Activated naive CD8-positive, alpha-beta T cell treated with anti-CD3 and anti-CD28 coated beads, Interleukin-2, amount 10 ng/mL, durations not matched to agents 7 days and 5 days (primary cell): ENCODE measurements at regions of chr4 and their contacts with region 1.

Region 1: DNA sequence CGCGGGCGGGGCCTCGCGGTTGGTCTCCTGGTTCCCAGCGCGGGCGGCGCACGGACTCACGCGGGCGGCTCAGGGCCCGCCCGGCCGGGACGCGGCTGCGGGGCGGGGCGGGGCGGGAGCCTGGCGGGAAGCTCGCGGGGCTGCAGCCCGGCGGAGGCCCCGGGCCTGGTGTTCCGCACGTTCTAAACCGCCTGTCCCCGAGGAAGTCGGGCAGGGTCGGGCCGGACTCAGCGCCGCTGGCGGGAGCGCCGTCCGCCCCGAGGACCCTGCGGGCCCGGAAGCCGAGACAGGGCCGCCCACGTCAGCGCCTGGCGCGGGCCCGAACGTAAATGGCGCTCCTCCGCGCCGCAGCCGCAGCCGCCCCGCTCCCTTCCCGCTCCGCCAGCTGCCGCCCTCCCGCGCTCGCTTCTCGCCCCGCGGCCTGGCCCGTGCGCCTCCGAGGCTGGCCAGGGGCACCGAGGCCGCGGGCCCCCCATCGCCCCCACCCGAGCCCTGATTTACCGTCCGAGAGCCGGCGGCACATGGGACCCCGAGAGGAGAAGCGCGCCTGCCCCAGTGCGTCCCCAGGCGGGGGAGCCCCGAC is 309 bp upstream of the CTBP1 start:
- DNase-seq: peak; percentile 93
- ATAC-seq: peak; percentile 51
- H3K4me3 Mint-ChIP-seq: peak overlapping the region; percentile 87
- H3K27ac Mint-ChIP-seq: peak overlapping the region; percentile 95
- H3K4me1 Mint-ChIP-seq: peaks cover 35% of the 10 kb centered on the region
- H3K27me3 Mint-ChIP-seq: no peaks in the 10 kb centered on the region

Region 2: GRCh38 chr4:1167247-1167949 is 81.8 kb before region 1 on chr4:
- POLR2A ChIA-PET with region 1: interaction called, 11 read pairs
- DNase-seq: peak; percentile 87
- ATAC-seq: peak; percentile 93
- H3K4me3 Mint-ChIP-seq: peak overlapping the region; percentile 84
- H3K27ac Mint-ChIP-seq: peak overlapping the region; percentile 87
- H3K4me1 Mint-ChIP-seq: peaks cover 20% of the 10 kb centered on the region
- H3K27me3 Mint-ChIP-seq: peaks cover 12% of the 10 kb centered on the region

Region 3: DNA sequence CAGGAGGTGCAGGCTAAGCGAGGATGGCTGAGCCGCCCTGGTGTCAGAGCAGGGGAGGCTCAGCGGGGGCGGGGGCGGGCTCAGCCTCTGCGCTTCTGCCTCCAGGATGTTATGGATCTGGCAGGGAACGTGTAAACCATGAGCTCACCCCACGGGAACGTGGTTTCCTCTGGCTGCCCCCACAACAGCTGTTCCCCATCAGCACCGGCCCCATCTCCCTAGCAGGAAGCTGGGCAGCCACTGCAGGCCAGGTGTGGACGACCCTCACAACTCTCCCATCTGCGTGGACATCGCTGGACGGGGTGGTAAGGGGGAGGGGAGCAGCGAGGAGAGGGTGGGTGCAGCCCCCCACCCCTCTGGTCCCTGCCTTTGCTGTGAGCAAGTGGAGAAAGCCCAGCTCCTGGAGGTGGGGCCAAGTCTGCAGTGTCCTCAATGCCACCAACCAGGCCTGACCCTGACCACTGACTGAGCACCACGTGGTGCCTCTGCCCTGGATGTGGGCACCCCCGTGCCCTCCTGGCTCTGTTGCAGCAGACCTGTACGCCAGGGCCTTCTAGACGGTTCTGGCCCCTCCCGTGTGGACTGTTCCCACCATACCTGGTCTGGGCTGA is 48.7 kb before region 1 on chr4:
- POLR2A ChIA-PET with region 1: interaction called, 56 read pairs
- DNase-seq: peak; percentile 56
- ATAC-seq: no peak
- H3K4me3 Mint-ChIP-seq: peak overlapping the region; percentile 83
- H3K27ac Mint-ChIP-seq: peak overlapping the region; percentile 100
- H3K4me1 Mint-ChIP-seq: peaks cover 37% of the 10 kb centered on the region
- H3K27me3 Mint-ChIP-seq: no peaks in the 10 kb centered on the region

Region 4: DNA sequence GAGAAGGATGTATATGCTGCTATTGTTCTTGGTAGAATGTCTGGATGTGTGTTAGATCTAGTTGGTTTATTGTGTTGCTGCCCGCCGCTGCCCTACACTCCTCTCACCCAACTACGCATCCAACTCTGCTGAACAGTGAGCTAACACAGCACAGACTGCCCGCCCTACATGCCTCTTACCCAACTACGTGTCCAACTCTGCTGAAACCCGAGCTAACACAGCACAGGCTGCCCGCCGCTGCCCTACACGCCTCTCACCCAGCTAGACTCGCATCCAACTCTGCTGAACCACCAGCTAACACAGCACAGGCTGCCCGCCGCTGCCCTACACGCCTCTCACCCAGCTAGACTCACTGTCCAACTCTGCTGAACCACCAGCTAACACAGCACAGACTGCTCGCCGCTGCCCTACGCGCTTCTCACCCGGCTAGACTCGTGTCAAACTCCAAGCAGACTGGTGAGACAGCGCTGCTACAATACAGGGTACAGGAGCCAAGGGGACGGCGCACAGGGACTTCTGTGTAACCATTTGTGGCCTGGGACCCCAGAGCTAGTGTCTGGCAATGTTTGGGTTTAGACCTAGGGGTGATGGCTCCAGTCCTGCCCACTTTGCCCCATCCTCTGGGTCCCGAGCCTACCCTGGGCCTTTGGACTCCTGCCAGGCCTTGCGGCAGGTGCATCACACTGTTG is 11.3 kb after region 1 on chr4:
- POLR2A ChIA-PET with region 1: interaction called, 82 read pairs
- DNase-seq: no peak
- ATAC-seq: no peak
- H3K4me3 Mint-ChIP-seq: no peak overlapping the region
- H3K27ac Mint-ChIP-seq: peak overlapping the region; percentile 61
- H3K4me1 Mint-ChIP-seq: peaks cover 14% of the 10 kb centered on the region
- H3K27me3 Mint-ChIP-seq: no peaks in the 10 kb centered on the region

Region 5: GRCh38 chr4:1266881-1267763 is 17.9 kb after region 1 on chr4:
- POLR2A ChIA-PET with region 1: interaction called, 82 read pairs
- DNase-seq: no peak
- ATAC-seq: peak; percentile 65
- H3K4me3 Mint-ChIP-seq: peak overlapping the region; percentile 79
- H3K27ac Mint-ChIP-seq: peak overlapping the region; percentile 93
- H3K4me1 Mint-ChIP-seq: peaks cover 16% of the 10 kb centered on the region
- H3K27me3 Mint-ChIP-seq: no peaks in the 10 kb centered on the region

Region 6: GRCh38 chr4:1289207-1290164 is 40.2 kb after region 1 on chr4 and contains the start of gene MAEA:
- POLR2A ChIA-PET with region 1: interaction called, 39 read pairs
- DNase-seq: peak; percentile 97
- ATAC-seq: peak; percentile 93
- H3K4me3 Mint-ChIP-seq: peak within 1 kb of the TSS; percentile 91
- H3K27ac Mint-ChIP-seq: peak within 1 kb of the TSS; percentile 85
- H3K4me1 Mint-ChIP-seq: peaks cover 26% of the 10 kb centered on the region
- H3K27me3 Mint-ChIP-seq: no peaks in the 10 kb centered on the region
- total RNA-seq, gene MAEA: 73.2 to 82.9 TPM

Region 7: GRCh38 chr4:1346781-1347409 is 97.7 kb after region 1 on chr4 and contains the start of gene UVSSA:
- POLR2A ChIA-PET with region 1: interaction called, 66 read pairs
- DNase-seq: peak; percentile 100
- ATAC-seq: peak; percentile 91
- H3K4me3 Mint-ChIP-seq: peak within 1 kb of the TSS; percentile 98
- H3K27ac Mint-ChIP-seq: peak within 1 kb of the TSS; percentile 96
- H3K4me1 Mint-ChIP-seq: peaks cover 25% of the 10 kb centered on the region
- H3K27me3 Mint-ChIP-seq: no peaks in the 10 kb centered on the region
- total RNA-seq, gene UVSSA: 30.0 to 30.9 TPM